Activated T-helper 2 cell treated with anti-CD3 and anti-CD28 coated beads, Interferon-gamma antibody, Interleukin-2, Interleukin-4, amounts not matched to agents 10 μg/mL and 5 μg/mL and 100 μg/mL, durations not matched to agents 14 hours and 24 hours and 36 hours (primary cell): ENCODE measurements at regions of chr3 and their contacts with region 1.

Region 1: GRCh38 chr3:117019082-117019713 is 309.6 kb downstream of the TUSC7 start:
- DNase-seq: peak; percentile 16
- H3K4me3 Mint-ChIP-seq: no peak overlapping the region
- H3K27ac Mint-ChIP-seq: no peak overlapping the region
- H3K4me1 Mint-ChIP-seq: peaks cover 5% of the 10 kb centered on the region
- H3K27me3 Mint-ChIP-seq: no peaks in the 10 kb centered on the region

Region 2: GRCh38 chr3:116647960-116648359 is 371.2 kb before region 1 on chr3:
- intact Hi-C with region 1: no loop called
- DNase-seq: no peak
- H3K4me3 Mint-ChIP-seq: no peak overlapping the region
- H3K27ac Mint-ChIP-seq: no peak overlapping the region
- H3K4me1 Mint-ChIP-seq: no peaks in the 10 kb centered on the region
- H3K27me3 Mint-ChIP-seq: no peaks in the 10 kb centered on the region

Region 3: GRCh38 chr3:116994351-116994879 is 24.8 kb before region 1 on chr3:
- intact Hi-C with region 1: no loop called
- DNase-seq: no peak
- H3K4me3 Mint-ChIP-seq: no peak overlapping the region
- H3K27ac Mint-ChIP-seq: no peak overlapping the region
- H3K4me1 Mint-ChIP-seq: no peaks in the 10 kb centered on the region
- H3K27me3 Mint-ChIP-seq: no peaks in the 10 kb centered on the region

Region 4: GRCh38 chr3:117526470-117527079 is 507.4 kb after region 1 on chr3:
- intact Hi-C with region 1: loop called (anchors 5 kb)
- DNase-seq: no peak
- H3K4me3 Mint-ChIP-seq: no peak overlapping the region
- H3K27ac Mint-ChIP-seq: no peak overlapping the region
- H3K4me1 Mint-ChIP-seq: no peaks in the 10 kb centered on the region
- H3K27me3 Mint-ChIP-seq: no peaks in the 10 kb centered on the region

Region 5: DNA sequence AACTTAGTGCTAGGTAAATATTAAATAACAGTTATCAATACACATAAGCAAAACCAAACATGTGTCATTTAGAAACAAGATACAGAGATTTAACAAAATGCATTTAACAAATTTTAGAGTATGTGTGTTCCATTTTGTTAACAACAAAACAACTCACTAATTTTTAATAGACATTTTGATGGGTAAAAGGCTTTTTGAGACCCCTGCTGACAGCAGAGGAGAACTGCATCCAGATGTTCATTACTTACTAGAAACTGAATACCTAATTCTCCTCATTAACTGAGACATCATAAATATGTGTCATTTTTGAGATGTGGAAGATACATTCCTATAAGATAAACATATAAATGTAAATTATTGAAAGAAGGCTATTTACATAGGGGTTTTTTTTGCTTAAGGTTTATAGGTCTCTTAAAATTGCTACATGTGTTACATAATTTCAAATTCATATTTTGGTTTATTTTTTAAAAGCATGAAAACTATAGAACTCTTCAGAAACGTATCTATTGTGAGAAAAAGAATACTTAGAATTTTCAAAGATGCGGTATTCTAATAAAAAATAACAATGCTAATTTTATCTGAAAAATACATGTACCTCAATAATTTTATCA is 700.2 kb after region 1 on chr3:
- intact Hi-C with region 1: loop called (anchors 2 kb)
- DNase-seq: no peak
- H3K4me3 Mint-ChIP-seq: no peak overlapping the region
- H3K27ac Mint-ChIP-seq: no peak overlapping the region
- H3K4me1 Mint-ChIP-seq: no peaks in the 10 kb centered on the region
- H3K27me3 Mint-ChIP-seq: no peaks in the 10 kb centered on the region

Region 6: GRCh38 chr3:117997201-117998049 is 978.2 kb after region 1 on chr3:
- intact Hi-C with region 1: loop called (anchors 2 kb)
- DNase-seq: peak; percentile 36
- H3K4me3 Mint-ChIP-seq: no peak overlapping the region
- H3K27ac Mint-ChIP-seq: no peak overlapping the region
- H3K4me1 Mint-ChIP-seq: no peaks in the 10 kb centered on the region
- H3K27me3 Mint-ChIP-seq: no peaks in the 10 kb centered on the region